Uterus (tissue), 4 donors: ENCODE measurements at regions of chr1 and their contacts with region 1.

Region 1: GRCh38 chr1:208245185-208245705 is 1.1 kb upstream of the PLXNA2 start:
- DNase-seq: peak; percentile 92 to 96
- H3K4me3 ChIP-seq: peak overlapping the region; percentile 71 to 91
- H3K27ac ChIP-seq: peak overlapping the region; percentile 87 to 89
- H3K4me1 ChIP-seq: no peaks in the 10 kb centered on the region
- H3K27me3 ChIP-seq: no peaks in the 10 kb centered on the region
- CTCF ChIP-seq: peak; percentile 83 to 91 (median 88)
- POLR2A ChIP-seq: peak; percentile 17 to 38

Region 2: DNA sequence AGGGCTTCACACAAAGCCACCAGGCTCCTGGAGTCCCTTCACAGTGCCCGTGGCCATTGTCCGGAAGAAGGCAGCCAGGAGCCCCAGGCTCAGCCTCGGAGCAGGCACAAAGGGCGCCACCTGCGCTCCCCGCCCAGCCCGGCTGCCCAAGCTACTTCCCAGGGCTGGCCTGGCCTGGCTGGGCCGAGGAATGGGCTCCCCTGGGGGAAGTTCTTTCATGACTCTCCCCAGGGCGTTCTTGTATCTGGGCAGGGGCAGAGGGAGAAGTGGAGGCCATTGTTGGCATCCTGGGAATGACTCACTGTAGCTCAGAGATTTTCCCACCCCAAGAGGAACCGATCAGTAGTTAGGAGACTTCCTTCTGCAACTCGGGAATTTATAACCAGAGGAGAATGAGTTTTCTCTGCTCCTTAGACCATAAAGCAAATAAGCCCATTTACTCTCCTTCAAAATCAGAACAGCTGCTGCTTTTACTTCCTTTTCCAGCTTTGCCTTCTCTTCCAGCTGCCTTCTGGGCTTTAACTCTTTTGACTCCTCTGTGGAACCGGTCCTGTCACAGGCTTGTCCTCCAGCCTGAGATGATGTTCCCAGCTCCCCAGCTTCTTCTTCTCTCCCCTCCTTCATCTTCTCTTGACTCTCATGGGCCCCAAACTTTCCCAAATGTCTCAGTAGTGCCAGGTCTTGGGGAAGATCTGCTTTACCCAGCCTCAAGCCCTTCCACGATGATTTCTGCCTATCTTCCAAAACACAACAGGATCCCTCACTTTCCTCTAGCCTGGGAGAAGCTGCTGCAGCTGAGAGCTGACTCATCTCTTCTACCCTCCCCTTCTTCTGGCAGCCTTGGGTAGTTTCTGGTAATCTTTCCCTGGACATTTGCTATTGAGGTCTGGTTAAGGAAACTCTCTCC is 215.6 kb before region 1 on chr1:
- intact Hi-C with region 1: loop called (anchors 5 kb)
- DNase-seq: peak; percentile 40 to 47
- H3K4me3 ChIP-seq: no peak overlapping the region
- H3K27ac ChIP-seq: peak overlapping the region; percentile 77 to 81
- H3K4me1 ChIP-seq: peaks cover 7 to 8% of the 10 kb centered on the region in 2 donors
- H3K27me3 ChIP-seq: no peaks in the 10 kb centered on the region
- CTCF ChIP-seq: no peak
- POLR2A ChIP-seq: no peak

Region 3: DNA sequence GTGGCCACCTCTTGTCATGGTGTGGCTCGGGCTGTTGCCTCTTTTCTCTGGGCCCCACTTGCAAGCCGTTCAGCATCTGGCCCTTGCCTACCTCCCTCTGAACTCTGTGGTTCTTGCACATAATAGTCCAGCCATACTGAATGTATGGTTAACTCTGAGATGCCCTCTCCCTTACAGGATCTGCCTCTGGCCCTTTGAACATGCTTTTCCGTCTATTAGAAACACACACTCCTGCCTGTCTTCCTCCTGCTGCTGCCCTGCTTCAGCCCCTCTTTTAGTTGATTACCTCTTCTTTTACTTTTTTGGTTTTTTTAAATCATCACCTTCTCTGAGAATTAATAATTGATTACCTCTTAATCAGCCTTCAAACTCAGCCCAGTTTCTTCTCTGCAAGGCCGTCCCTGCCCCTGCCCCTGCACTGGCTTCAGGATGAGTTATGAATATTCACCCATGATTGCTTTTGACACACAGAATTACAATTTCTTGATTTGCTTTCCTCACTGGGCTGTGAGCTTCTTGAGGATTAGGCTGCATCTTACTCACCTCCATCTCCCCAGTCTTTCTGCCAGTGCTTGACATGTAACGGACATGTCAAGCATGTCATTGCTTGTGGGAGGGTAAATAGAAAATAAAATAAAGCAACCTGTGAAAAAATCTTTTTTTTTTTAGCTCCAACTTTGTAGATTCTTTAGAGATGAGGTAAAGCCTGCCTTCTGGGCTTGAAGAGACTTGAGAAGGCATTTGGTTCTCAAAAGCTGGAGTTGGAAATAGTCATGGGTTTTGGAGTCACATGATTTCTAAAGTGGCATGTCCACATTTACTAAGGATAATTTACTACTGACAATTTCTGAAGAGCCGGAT is 159.4 kb before region 1 on chr1:
- intact Hi-C with region 1: loop called (anchors 5 kb)
- DNase-seq: no peak
- H3K4me3 ChIP-seq: peak overlapping the region in 1 of 2 donors; percentile 2
- H3K27ac ChIP-seq: peak overlapping the region; percentile 65 to 69
- H3K4me1 ChIP-seq: no peaks in the 10 kb centered on the region
- H3K27me3 ChIP-seq: no peaks in the 10 kb centered on the region
- CTCF ChIP-seq: no peak
- POLR2A ChIP-seq: no peak

Region 4: DNA sequence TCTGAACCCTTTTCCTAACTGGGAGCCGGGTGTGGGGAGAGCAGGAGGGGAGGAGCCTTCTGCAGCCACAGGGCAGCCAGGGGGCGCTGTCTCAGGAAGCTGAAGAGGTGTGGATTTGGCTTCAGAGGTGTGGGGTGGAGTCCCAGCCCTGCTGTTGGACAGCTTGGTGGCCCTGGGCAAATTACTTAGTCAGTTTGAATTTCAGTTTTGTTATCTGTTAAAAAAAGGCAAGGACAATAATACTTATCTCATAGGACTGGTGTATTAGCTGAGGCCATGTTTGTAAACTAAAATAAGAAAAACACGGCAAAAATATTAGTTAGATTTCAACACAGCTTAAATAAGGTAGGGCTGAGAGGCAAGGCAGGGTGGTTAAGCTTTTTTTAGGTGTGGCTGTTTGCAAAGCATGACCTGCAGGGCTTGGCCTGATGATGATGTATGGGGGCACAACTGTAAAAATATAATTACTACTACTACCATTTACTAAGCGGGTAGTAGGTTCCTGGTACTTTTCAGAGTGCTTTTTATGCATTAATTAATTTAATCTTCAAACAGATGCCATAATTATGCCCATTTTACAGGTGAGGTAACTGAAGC is 112.9 kb before region 1 on chr1:
- intact Hi-C with region 1: loop called (anchors 10 kb)
- DNase-seq: peak; percentile 66 to 76
- H3K4me3 ChIP-seq: no peak overlapping the region
- H3K27ac ChIP-seq: no peak overlapping the region
- H3K4me1 ChIP-seq: peaks cover 0 to 9% of the 10 kb centered on the region in 2 donors
- H3K27me3 ChIP-seq: no peaks in the 10 kb centered on the region
- CTCF ChIP-seq: peak; percentile 60 to 69 (median 68)
- POLR2A ChIP-seq: no peak